ENCODE measurements at regions of chr6 and their contacts with region 1.

Region 1: DNA sequence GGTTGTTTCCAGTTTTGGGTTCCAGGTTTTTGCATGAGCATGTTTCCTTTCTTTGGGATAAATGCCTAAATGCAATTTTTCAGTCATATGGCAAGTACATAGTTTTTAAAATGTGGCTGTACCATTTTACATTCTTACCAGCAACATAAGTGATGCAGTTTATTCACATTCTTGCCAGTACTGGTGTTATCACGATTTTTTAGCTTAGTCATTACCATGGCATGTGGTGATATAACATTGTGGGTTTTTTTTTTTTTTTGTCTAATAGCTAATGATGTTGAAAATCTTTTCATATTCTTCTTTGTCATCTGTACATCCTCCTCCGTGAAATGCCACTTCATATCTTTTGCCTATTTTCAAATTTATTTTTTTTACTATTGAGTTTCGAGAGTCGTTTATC is 2.9 kb upstream of the TDRD6 start:
- DNase-seq: no peak
- H3K4me3 ChIP-seq: no peak overlapping the region
- H3K27ac ChIP-seq: no peak overlapping the region
- H3K4me1 ChIP-seq: no peaks in the 10 kb centered on the region
- H3K27me3 ChIP-seq: no peaks in the 10 kb centered on the region
- CTCF ChIP-seq: no peak
- EP300 ChIP-seq: no peak
- POLR2A ChIP-seq: no peak

Region 2: DNA sequence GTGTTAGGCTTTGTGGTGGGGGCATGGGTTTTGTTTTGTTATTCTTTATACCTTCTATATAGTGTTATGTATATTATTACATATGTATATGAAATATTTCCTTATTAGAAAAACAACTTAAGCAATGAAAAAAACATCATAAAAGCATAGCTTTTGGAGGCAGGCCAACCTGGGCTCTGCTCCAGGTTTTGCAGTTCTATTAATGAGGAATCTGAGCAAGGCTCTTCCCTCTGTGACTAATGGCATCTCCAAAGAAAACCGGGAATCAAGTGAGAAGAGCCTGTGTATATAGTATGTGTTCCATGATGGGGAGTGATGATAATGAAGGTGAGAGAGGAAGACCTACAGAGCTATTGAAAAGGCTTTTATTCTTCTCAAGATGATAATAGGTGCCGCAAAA is 960.3 kb before region 1 on chr6:
- intact Hi-C with region 1: loop called in 1 of 4 experiments (anchors 5 kb)
- DNase-seq: peak in 3 of 5 donors; percentile 48 to 67 (median 53)
- H3K4me3 ChIP-seq: no peak overlapping the region
- H3K27ac ChIP-seq: no peak overlapping the region
- H3K4me1 ChIP-seq: no peaks in the 10 kb centered on the region
- H3K27me3 ChIP-seq: no peaks in the 10 kb centered on the region
- CTCF ChIP-seq: no peak
- EP300 ChIP-seq: no peak
- POLR2A ChIP-seq: no peak

Region 3: DNA sequence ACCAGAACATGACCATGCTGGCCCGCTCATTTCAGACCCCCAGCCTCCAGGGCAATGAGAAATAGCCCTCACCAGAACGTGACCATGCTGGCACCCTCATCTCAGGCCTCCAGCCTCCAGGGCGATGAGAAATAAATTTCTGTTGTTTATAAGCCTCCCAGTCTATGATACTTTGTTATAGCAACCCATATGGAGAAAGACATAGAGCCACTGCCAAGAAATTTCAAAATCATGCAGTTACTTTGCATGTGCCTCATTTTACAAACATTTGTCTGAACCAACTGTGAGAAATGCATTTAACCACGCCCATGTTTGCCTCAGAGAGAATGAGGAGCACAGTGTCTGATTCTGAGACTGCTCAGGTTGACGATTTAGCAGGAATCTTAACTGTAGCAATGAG is 47.6 kb before region 1 on chr6:
- intact Hi-C with region 1: no loop called
- DNase-seq: peak in 1 of 5 donors; percentile 27
- H3K4me3 ChIP-seq: no peak overlapping the region
- H3K27ac ChIP-seq: no peak overlapping the region
- H3K4me1 ChIP-seq: no peaks in the 10 kb centered on the region
- H3K27me3 ChIP-seq: no peaks in the 10 kb centered on the region
- CTCF ChIP-seq: no peak
- EP300 ChIP-seq: no peak
- POLR2A ChIP-seq: no peak

Region 4: GRCh38 chr6:46925563-46926253 is 240.9 kb after region 1 on chr6:
- intact Hi-C with region 1: no loop called
- DNase-seq: peak in 1 of 5 donors; percentile 23
- H3K4me3 ChIP-seq: no peak overlapping the region
- H3K27ac ChIP-seq: no peak overlapping the region
- H3K4me1 ChIP-seq: no peaks in the 10 kb centered on the region
- H3K27me3 ChIP-seq: no peaks in the 10 kb centered on the region
- CTCF ChIP-seq: no peak
- EP300 ChIP-seq: no peak
- POLR2A ChIP-seq: no peak

Measured in ovary (tissue), 10 donors.